Activated B cell treated with CpG ODN at 0.5 μM for 24 hours (primary cell): ENCODE measurements at regions of chr3 and their contacts with region 1.

Region 1: DNA sequence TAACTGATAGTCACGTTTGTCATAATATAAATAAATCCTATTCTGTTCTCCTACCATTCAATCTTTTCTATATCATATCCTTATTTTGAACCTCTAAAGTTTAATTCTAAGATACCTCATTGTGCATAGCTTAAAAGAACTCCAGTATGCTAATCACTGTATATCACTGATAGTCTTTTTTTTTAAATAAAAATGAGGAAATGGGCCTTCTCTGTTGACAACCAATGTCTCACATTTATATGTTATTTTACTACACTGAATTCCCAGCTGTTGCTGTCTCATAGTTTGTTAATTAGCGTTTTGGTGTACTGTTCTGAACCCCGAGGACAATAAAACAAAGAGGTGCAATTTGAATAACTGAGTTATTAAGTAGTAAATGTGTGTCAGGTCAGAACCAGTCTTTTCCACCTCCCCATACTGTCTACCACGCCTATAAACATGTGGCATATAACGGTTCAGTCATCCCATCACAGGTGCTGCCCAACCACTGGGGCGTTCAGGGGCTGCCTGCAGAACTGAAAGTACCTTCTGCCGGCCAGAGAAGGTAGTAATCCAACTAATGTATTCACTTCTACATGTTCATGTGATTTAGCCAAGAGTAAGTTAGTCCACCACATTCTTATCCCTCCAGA is 14.9 kb downstream of the CBLB start:
- DNase-seq: peak; percentile 46
- ATAC-seq: peak; percentile 99
- H3K4me3 Mint-ChIP-seq: peak overlapping the region; percentile 66
- H3K27ac Mint-ChIP-seq: peak overlapping the region; percentile 99
- H3K4me1 Mint-ChIP-seq: peaks cover 51% of the 10 kb centered on the region
- H3K27me3 Mint-ChIP-seq: no peaks in the 10 kb centered on the region
- CTCF ChIP-seq: no peak

Region 2: GRCh38 chr3:104154896-104155295 is 1699.0 kb before region 1 on chr3:
- CTCF ChIA-PET with region 1: no interaction called
- POLR2A ChIA-PET with region 1: no interaction called
- intact Hi-C with region 1: no loop called
- DNase-seq: no peak
- ATAC-seq: no peak
- H3K4me3 Mint-ChIP-seq: no peak overlapping the region
- H3K27ac Mint-ChIP-seq: no peak overlapping the region
- H3K4me1 Mint-ChIP-seq: no peaks in the 10 kb centered on the region
- H3K27me3 Mint-ChIP-seq: no peaks in the 10 kb centered on the region
- CTCF ChIP-seq: no peak

Region 3: DNA sequence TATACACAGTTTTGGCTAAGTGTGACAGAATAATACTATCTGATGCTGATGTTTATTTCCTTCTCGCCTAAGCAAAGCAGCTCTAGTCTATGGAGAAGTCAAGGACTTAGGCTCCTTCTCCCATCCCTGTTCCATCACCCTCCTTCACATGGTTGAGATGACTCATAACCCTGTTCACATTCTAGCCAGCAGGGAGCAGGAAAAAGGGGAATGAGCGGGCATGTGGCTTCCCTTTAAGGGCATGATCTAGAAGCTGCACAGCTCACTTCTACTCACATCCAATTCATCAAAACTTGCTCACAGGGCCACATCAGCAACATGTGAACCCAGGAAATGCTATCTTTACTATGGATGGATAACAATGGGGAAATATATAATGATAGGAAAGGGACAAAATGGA is 26.0 kb before region 1 on chr3:
- CTCF ChIA-PET with region 1: no interaction called
- POLR2A ChIA-PET with region 1: interaction called, 3 read pairs
- intact Hi-C with region 1: loop called (anchors 1 kb)
- DNase-seq: no peak
- ATAC-seq: no peak
- H3K4me3 Mint-ChIP-seq: no peak overlapping the region
- H3K27ac Mint-ChIP-seq: peak overlapping the region; percentile 50
- H3K4me1 Mint-ChIP-seq: peaks cover 72% of the 10 kb centered on the region
- H3K27me3 Mint-ChIP-seq: no peaks in the 10 kb centered on the region
- CTCF ChIP-seq: no peak

Region 4: DNA sequence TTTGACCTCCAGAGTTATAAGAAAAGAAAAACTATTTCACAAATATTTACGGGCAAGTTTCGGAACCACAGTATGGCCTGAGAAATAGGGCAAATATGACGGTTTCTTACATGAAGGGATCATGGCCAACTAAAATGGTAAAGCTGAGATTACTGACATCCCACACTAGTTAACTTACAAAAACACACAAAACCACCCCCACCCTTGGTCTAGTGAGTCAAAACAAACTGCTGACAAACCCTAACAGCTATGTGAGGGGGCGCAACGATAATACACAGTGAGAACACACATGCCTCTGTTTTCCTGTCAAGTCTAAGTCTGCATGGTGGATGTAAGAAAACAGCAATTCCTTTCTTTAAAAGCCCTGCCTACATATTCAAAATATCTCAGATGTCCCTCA is 17.4 kb before region 1 on chr3:
- CTCF ChIA-PET with region 1: no interaction called
- POLR2A ChIA-PET with region 1: interaction called, 17 read pairs
- intact Hi-C with region 1: loop called (anchors 1 kb)
- DNase-seq: no peak
- ATAC-seq: no peak
- H3K4me3 Mint-ChIP-seq: peak overlapping the region; percentile 72
- H3K27ac Mint-ChIP-seq: peak overlapping the region; percentile 82
- H3K4me1 Mint-ChIP-seq: peaks cover 63% of the 10 kb centered on the region
- H3K27me3 Mint-ChIP-seq: no peaks in the 10 kb centered on the region
- CTCF ChIP-seq: no peak

Region 5: GRCh38 chr3:106985721-106986120 is 1131.8 kb after region 1 on chr3:
- CTCF ChIA-PET with region 1: no interaction called
- POLR2A ChIA-PET with region 1: no interaction called
- intact Hi-C with region 1: no loop called
- DNase-seq: no peak
- ATAC-seq: no peak
- H3K4me3 Mint-ChIP-seq: no peak overlapping the region
- H3K27ac Mint-ChIP-seq: no peak overlapping the region
- H3K4me1 Mint-ChIP-seq: no peaks in the 10 kb centered on the region
- H3K27me3 Mint-ChIP-seq: no peaks in the 10 kb centered on the region
- CTCF ChIP-seq: no peak